ENCODE measurements at regions of chr2 and their contacts with region 1.

Region 1: DNA sequence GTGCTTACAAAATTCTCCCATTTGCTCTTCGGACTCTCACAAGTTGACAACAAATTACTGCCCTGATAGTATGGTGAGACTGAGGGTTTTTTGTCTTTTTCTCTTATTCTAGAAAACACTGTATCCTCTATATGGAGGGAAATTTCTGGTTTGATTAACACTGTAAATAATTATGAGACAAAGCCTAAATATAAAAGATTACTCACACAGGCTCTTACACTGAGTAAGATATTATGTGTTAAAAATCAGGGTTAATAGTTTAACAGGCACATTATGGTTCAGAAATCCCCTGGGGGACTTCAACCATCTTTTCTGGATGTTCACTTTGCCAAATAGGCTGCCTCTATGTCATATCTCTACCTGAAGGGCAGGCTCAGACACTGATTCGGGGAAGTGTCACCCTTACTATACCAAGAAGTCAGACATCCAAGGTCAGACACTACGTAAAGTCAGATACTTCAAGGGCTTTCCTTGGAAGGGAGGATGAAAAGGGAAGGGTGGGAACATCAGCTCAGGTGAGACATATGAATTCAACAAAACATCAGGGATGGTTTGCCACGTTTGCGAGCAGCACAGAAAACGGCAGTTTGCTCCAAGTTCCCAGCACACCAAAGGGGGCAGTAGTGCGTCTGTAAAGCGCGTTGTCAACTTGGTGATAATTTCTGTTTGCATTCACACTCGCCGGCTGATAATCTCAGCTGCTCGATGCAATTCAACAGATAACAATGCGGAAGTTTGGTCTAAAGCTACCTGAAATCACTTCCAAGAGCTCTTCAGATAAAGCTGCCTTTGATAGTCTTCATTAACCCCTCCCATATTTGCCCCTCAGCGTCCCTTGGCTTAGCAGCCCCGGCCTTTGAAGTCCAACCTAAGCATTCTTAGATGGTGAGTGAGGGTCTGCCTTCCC is 972 bp upstream of the RASGRP3 start:
- DNase-seq: peak; percentile 94
- ATAC-seq: peak; percentile 60
- H3K4me3 ChIP-seq: peak overlapping the region; percentile 68 to 98 (median 83)
- H3K4me3 Mint-ChIP-seq: peak overlapping the region; percentile 95
- H3K27ac ChIP-seq: peak overlapping the region; percentile 92 to 97
- H3K27ac Mint-ChIP-seq: peak overlapping the region; percentile 98
- H3K4me1 ChIP-seq: peaks cover 32% of the 10 kb centered on the region in 2 donors
- H3K4me1 Mint-ChIP-seq: peaks cover 42% of the 10 kb centered on the region
- H3K27me3 ChIP-seq: no peaks in the 10 kb centered on the region
- H3K27me3 Mint-ChIP-seq: no peaks in the 10 kb centered on the region
- CTCF ChIP-seq: peak; percentile 88

Region 2: DNA sequence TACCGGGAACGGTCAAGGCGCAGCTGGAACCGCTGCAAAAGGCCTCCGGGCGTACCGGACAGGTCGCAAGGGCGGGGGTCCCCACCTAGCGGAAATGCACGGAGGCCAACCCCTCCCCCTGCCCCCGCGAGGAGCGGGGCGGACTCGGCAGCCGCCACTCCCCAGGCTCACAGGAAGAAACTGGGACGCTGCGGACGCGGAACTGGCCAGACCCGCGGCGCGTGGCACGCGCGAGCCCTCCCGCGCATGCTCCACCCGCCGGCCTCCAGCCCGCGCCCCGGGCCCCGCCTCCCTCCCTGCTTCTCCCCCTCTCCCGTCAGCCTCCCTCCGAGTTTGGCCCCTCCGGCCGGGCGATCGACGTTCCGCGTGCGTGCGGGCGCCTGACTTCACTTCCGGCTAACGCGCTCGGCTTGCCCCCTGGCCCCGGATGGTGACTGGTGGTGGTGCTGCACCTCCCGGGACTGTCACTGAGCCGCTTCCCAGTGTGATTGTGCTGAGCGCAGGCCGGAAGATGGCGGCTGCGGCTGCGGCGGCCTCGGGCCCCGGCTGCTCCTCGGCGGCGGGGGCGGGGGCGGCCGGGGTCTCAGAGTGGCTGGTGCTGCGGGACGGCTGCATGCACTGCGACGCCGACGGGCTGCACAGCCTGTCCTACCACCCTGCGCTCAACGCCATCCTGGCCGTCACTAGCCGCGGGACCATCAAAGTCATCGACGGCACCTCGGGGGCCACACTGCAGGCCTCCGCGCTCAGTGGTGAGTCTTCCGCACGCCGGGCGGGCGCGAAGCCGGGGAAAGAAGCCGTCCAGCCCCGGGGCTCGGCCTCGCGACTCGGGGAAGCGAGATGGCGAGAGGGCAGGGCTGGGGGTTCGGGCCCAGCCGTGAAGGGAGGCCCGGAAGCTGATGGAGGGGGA is 1118.5 kb before region 1 on chr2 and contains the start of gene BIRC6:
- CTCF ChIA-PET with region 1: no interaction called
- POLR2A ChIA-PET with region 1: no interaction called
- intact Hi-C with region 1: loop called (anchors 5 kb)
- DNase-seq: peak; percentile 97
- ATAC-seq: peak; percentile 86
- H3K4me3 ChIP-seq: peak within 1 kb of the TSS; percentile 63 to 98 (median 97)
- H3K4me3 Mint-ChIP-seq: peak within 1 kb of the TSS; percentile 91
- H3K27ac ChIP-seq: peak within 1 kb of the TSS; percentile 91 to 92
- H3K27ac Mint-ChIP-seq: peak within 1 kb of the TSS; percentile 98
- H3K4me1 ChIP-seq: peaks cover 34 to 36% of the 10 kb centered on the region in 2 donors
- H3K4me1 Mint-ChIP-seq: peaks cover 40% of the 10 kb centered on the region
- H3K27me3 ChIP-seq: no peaks in the 10 kb centered on the region
- H3K27me3 Mint-ChIP-seq: no peaks in the 10 kb centered on the region
- CTCF ChIP-seq: no peak
- total RNA-seq, gene BIRC6: 166 and 196 TPM in 2 replicates

Region 3: DNA sequence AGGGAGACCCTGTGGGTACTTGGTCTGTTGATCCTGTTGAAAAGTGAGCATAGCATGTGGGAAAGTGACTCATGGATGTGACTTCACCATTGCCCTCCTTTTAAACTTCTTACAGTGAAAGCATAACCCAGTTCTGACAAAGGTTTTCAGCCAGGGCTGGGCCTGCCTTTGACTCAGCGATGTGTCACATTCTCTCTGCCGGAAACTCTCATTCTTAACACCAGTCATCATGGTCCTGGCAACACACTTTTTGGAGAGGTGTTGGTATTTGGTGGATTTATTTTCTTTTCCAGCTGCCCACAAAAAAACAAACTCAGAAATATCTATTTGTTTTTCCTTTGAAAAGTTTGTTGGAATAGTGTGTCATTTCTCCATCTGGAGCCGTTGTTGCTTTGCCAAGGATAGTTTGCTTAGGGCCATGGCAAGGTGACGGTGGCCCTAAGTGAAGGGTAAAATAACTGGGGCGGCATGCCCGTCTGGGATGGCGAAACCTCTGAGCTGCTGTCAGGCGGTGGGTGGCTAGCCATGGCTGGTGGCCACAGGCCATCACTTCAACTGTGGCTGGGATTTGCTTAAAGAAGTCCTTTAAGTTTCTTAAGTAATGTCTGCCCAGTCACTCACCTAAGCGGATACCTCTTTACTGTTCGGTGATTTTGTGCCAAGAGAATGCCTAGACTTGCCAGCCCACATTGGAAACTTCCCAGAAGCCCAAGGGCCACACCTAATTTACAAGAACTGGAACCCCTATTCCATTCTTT is 405.4 kb before region 1 on chr2:
- CTCF ChIA-PET with region 1: no interaction called
- POLR2A ChIA-PET with region 1: no interaction called
- intact Hi-C with region 1: no loop called
- DNase-seq: no peak
- ATAC-seq: no peak
- H3K4me3 ChIP-seq: no peak overlapping the region
- H3K4me3 Mint-ChIP-seq: no peak overlapping the region
- H3K27ac ChIP-seq: no peak overlapping the region
- H3K27ac Mint-ChIP-seq: no peak overlapping the region
- H3K4me1 ChIP-seq: no peaks in the 10 kb centered on the region
- H3K4me1 Mint-ChIP-seq: no peaks in the 10 kb centered on the region
- H3K27me3 ChIP-seq: no peaks in the 10 kb centered on the region
- H3K27me3 Mint-ChIP-seq: no peaks in the 10 kb centered on the region
- CTCF ChIP-seq: no peak

Region 4: DNA sequence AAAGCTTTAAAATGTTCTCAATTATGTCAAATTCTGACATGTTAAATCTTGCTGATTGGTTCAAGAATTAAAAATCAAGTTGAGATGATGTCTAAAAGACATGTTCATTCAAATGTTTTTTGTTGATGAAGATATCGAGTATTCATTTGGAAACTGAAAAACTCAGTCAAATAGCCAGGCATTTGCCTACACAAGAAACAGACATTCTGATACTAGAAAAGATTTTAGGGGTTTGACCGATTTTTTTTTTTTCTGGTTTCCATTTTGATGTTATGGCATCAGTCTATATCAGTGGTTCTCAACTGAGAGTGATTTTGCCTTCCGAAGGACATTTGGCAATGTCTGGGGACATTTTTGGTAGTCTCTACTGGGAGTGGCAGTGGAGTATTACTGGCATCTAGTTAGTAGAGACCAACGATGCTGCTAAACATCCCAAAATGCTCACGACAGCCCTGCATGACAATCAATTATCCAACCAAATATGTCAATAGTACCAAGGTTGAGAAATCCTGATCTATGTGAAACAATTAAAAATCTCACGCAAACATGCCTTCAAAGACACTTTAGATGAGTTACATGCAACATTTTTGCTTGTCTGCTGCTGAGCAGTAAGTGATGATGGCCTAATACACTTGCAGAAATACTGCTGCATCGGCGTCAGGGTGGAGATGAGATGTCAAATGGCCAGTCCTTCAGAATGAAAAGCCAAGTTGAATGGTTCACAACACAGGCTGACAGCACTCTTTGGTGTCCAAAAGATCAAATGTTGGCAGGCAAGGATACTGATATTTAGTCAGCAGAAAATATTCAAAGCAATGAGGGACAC is 13.5 kb after region 1 on chr2:
- CTCF ChIA-PET with region 1: interaction called, 78 read pairs
- POLR2A ChIA-PET with region 1: interaction called, 17 read pairs
- intact Hi-C with region 1: loop called (anchors 1 kb)
- DNase-seq: no peak
- ATAC-seq: no peak
- H3K4me3 ChIP-seq: peak overlapping the region in 1 of 5 experiments; percentile 22
- H3K4me3 Mint-ChIP-seq: peak overlapping the region; percentile 59
- H3K27ac ChIP-seq: peak overlapping the region; percentile 78 to 85
- H3K27ac Mint-ChIP-seq: peak overlapping the region; percentile 93
- H3K4me1 ChIP-seq: peaks cover 88 to 90% of the 10 kb centered on the region in 2 donors
- H3K4me1 Mint-ChIP-seq: peaks cover 86% of the 10 kb centered on the region
- H3K27me3 ChIP-seq: no peaks in the 10 kb centered on the region
- H3K27me3 Mint-ChIP-seq: no peaks in the 10 kb centered on the region
- CTCF ChIP-seq: no peak

Region 5: DNA sequence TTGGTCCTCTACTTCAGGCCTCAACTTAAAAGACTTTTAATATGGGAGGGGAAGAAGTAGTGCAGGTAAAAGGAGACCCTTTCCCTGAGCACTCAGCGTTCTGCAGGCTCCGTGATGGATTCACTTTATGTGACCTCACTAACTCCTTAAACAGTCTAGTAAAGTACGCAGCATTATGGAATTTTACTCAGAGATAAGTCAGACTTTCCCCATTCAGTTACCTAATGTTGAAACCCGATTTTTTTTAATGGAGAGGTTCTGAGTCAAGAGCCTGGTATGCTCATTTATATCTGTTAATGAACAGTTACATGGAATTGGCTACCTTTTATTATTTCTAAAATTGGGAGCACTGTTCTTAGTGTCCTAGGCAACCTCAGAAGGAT is 35.1 kb after region 1 on chr2:
- CTCF ChIA-PET with region 1: interaction called, 3 read pairs
- POLR2A ChIA-PET with region 1: no interaction called
- intact Hi-C with region 1: loop called (anchors 5 kb)
- DNase-seq: no peak
- ATAC-seq: no peak
- H3K4me3 ChIP-seq: no peak overlapping the region
- H3K4me3 Mint-ChIP-seq: no peak overlapping the region
- H3K27ac ChIP-seq: peak overlapping the region in 1 of 2 donors; percentile 65
- H3K27ac Mint-ChIP-seq: peak overlapping the region; percentile 59
- H3K4me1 ChIP-seq: peaks cover 0 to 3% of the 10 kb centered on the region in 2 donors
- H3K4me1 Mint-ChIP-seq: peaks cover 48% of the 10 kb centered on the region
- H3K27me3 ChIP-seq: no peaks in the 10 kb centered on the region
- H3K27me3 Mint-ChIP-seq: no peaks in the 10 kb centered on the region
- CTCF ChIP-seq: no peak

Region 6: DNA sequence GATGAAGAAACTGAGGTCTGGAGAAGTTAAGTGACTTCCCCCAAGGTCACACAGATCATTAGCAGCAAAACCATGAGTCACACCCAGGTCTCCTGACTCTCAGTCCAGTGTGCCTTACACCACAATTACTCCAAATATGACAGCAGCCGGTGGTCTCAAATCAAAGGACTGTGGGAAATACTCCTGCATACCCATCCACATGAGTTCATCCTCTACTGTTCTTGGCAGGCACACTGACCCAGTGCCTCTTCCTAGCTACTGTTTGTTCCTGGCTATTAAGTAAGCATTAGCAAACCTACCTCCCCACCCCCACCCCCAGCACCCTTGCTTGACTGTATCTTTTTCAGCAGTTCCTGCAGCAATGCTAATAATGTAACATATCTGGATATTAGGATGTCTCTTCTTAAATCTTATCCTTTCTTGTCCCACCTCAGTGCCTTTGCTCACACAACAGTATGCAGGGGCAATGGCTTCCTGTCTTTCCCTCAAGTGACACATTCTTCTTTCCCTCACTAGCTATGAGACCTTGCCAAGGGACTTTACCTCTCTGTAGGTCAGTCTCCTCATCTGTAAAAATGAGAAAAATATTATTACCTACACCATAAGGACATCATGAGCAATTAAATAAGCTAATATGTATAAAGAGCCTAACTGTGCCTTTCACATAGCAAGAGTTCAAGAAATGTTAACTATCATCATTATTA is 77.4 kb after region 1 on chr2:
- CTCF ChIA-PET with region 1: interaction called, 17 read pairs
- POLR2A ChIA-PET with region 1: interaction called, 8 read pairs
- intact Hi-C with region 1: no loop called
- DNase-seq: no peak
- ATAC-seq: no peak
- H3K4me3 ChIP-seq: no peak overlapping the region
- H3K4me3 Mint-ChIP-seq: no peak overlapping the region
- H3K27ac ChIP-seq: peak overlapping the region in 1 of 2 donors; percentile 55
- H3K27ac Mint-ChIP-seq: peak overlapping the region; percentile 28
- H3K4me1 ChIP-seq: peaks cover 10 to 14% of the 10 kb centered on the region in 2 donors
- H3K4me1 Mint-ChIP-seq: peaks cover 16% of the 10 kb centered on the region
- H3K27me3 ChIP-seq: no peaks in the 10 kb centered on the region
- H3K27me3 Mint-ChIP-seq: no peaks in the 10 kb centered on the region
- CTCF ChIP-seq: no peak

Region 7: DNA sequence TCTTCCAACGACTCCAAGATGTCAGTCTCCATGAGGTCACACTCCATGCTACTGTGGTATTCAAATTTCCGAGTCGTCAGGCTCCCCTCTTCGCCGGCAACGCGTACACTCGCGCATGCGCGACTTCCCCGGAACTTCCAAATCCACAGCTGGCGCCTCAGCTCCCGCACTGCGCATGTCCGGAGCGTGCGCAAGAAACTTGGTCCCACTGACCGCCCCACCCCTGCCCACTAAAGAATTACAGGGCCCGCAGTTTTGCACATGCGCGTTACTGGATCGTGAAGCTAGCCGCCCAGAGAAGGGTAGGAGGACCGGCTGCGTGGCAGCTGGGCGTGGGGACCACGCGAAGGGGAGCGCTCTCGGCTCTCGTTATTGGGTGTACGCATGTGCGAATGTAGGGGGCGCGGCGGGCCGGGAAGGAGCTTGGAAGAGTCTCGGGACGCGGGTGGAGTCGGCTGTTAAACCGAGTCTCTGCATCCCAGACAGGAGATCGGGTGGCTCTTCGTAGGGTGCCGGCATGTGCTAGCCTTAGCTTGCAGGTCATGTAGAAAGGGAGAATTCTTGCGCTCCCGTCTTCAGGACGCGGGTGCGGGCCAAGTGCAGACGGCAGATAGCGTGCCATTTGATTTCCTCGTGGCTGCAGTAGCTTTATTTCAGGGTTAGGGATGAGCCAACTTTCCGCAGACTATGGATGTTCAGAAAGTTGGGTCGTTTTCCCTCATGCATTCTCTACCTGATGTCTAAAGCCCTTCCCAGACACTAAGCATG is 123.9 kb after region 1 on chr2 and contains the start of gene FAM98A:
- CTCF ChIA-PET with region 1: interaction called, 22 read pairs
- POLR2A ChIA-PET with region 1: interaction called, 7 read pairs
- intact Hi-C with region 1: loop called (anchors 1 kb)
- DNase-seq: peak; percentile 99
- ATAC-seq: peak; percentile 94
- H3K4me3 ChIP-seq: peak within 1 kb of the TSS; percentile 78 to 99 (median 90)
- H3K4me3 Mint-ChIP-seq: peak within 1 kb of the TSS; percentile 97
- H3K27ac ChIP-seq: peak within 1 kb of the TSS; percentile 88 to 90
- H3K27ac Mint-ChIP-seq: peak within 1 kb of the TSS; percentile 94
- H3K4me1 ChIP-seq: peaks cover 16% of the 10 kb centered on the region in 2 donors
- H3K4me1 Mint-ChIP-seq: peaks cover 31% of the 10 kb centered on the region
- H3K27me3 ChIP-seq: no peaks in the 10 kb centered on the region
- H3K27me3 Mint-ChIP-seq: no peaks in the 10 kb centered on the region
- CTCF ChIP-seq: no peak
- total RNA-seq, gene FAM98A: 29.4 and 32.1 TPM in 2 replicates